Posterior cingulate gyrus (tissue), 11 donors: ENCODE measurements at regions of chr20 and their contacts with region 1.

Region 1: DNA sequence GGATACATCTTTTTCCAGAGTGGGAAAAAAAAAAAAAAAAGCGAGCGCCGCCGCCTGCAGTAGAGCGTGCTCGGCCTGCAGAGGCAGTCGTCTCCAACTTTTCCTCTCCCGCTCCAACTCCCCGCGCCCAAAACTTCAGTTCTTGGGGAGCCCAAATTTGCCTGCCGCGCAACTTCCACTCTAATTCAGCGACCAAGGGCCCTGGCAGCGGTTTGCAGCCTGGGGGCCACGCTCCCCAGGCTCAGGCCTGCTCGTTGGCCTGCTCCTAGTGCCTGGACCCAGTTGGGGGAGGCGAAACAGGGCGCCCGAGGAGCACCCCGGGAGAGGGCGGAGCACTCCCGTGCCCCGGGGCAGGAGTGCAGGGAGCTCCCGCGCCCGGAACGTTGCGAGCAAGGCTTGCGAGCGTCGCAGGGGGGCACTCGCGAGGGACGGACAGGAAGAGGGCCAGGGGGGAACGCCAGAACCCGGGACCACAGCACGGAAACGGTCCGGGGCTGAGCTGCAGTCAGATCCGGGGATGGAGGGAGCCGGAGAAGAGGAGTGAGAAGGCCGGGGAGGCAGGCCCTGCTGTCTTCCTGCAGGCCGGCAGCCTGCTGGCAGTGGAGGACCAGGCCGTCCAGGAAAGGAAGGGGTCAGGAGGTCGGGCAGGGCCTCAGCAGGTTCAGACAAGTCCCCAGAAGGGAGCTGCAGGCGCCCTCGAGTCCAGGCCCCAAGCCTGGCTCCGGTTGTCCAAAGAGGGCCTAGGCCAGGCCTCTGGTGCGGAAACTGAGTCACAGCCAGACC is at the start of gene STX16:
- DNase-seq: peak; percentile 78 to 97 (median 86)

Region 2: DNA sequence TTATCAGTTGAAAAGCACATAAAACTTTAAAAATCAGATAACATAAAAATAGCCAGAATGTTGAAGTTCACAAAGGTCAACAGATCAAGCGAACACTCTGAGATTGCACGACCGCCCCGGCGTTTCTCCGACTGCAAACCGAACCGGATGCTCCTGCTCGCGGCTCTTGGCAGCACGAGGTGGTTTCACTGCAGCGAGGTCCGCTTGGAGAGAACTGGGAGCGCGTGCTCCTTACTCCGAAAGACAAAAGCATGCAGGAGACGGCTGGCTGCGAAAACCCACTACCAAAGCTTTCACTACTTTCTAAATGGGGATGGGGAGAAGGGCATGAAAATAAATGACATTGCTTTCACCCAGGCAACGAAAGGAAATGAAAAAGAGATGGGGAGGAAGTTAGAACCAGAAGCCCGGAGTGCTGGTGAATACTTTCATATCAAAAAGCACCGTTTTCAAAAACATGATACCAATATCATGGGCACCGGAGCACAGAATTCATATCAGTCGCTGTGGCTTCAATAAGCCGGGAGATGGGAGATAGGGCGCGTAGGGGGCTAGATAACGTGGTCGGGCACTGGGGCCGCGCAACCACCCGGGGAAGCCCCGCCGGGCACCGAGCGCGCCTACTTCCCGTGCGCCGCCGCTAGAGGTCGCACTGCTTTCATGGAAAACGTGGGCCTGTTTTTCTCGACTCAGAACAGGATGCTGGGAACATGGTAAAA is 414.2 kb before region 1 on chr20:
- intact Hi-C with region 1: loop called (anchors 1 kb)
- DNase-seq: peak; percentile 53 to 96 (median 83)

Region 3: DNA sequence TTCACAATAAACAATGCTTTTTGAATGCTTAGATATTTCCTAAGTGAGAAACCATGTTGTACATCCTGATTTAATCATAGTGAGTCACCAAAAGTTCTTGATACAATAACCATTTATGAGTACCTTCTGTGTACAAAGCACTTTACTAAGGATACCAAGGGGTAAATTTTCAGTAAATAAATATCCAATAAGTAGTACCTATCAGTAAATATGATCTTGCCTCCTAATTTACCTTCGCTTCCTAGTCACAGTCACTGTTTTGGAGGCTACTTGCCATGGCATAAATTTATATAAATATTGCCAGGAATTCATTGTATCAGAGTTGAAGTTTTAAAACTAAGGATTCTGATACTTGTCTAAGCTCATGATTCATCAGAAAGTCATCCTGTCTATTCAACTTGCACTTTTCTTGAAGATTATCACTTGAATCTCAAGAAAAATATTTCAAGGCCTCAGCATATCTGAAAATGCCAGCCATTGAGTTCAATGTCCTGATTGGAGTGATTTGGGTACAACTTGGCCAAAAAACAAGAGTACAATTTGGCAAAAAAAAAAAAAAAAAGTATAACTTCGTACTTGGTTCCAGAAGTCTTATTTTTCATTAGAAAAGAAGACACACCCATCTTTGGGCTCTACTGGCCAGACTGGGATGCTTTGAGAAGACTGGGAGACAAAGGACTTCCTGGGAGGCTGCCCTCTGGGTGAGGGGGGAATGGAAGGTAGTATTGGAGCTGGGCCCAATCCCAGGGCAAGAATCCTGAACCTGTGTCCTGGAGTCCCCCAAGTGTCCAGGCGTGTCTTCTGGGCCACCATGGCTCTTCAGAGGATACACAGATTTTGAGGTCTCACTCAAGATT is 308.6 kb before region 1 on chr20:
- intact Hi-C with region 1: no loop called
- DNase-seq: no peak

Region 4: GRCh38 chr20:58388882-58389323 is 262.1 kb before region 1 on chr20 and contains the start of gene VAPB:
- intact Hi-C with region 1: loop called (anchors 10 kb)
- DNase-seq: peak; percentile 88 to 99 (median 95)

Region 5: GRCh38 chr20:58692594-58693226 is 41.7 kb after region 1 on chr20 and contains the start of gene NPEPL1:
- intact Hi-C with region 1: loop called (anchors 5 kb)
- DNase-seq: peak in 3 of 10 donors; percentile 11 to 75 (median 70)

Region 6: GRCh38 chr20:58850693-58851174 is 199.8 kb after region 1 on chr20 and contains the start of gene GNAS-AS1:
- intact Hi-C with region 1: loop called (anchors 10 kb)
- DNase-seq: peak; percentile 40 to 94 (median 72)

Region 7: GRCh38 chr20:58911970-58912369 is 261.0 kb after region 1 on chr20:
- intact Hi-C with region 1: no loop called
- DNase-seq: no peak